Mammary epithelial cell (primary cell): ENCODE measurements at regions of chr14 and their contacts with region 1.

Region 1: GRCh38 chr14:67285876-67286452 is 44.7 kb downstream of the PALS1 start:
- DNase-seq: peak; percentile 11
- H3K4me3 ChIP-seq: no peak overlapping the region
- H3K27ac ChIP-seq: no peak overlapping the region
- H3K4me1 ChIP-seq: no peaks in the 10 kb centered on the region
- H3K27me3 ChIP-seq: no peaks in the 10 kb centered on the region
- CTCF ChIP-seq: peak; percentile 38 to 53

Region 2: GRCh38 chr14:66403183-66403582 is 882.8 kb before region 1 on chr14:
- CTCF ChIA-PET with region 1: no interaction called
- dilution Hi-C with region 1: no loop called
- in situ Hi-C with region 1: no loop called
- intact Hi-C with region 1: loop called (anchors 5 kb)
- DNase-seq: peak; percentile 50
- H3K4me3 ChIP-seq: no peak overlapping the region
- H3K27ac ChIP-seq: no peak overlapping the region
- H3K4me1 ChIP-seq: no peaks in the 10 kb centered on the region
- H3K27me3 ChIP-seq: no peaks in the 10 kb centered on the region
- CTCF ChIP-seq: peak; percentile 48 to 72

Region 3: GRCh38 chr14:67166450-67166853 is 119.5 kb before region 1 on chr14:
- CTCF ChIA-PET with region 1: interaction called, 5 read pairs
- dilution Hi-C with region 1: no loop called
- in situ Hi-C with region 1: loop called (anchors 5 to 10 kb)
- intact Hi-C with region 1: loop called (anchors 1 kb)
- DNase-seq: peak; percentile 21
- H3K4me3 ChIP-seq: no peak overlapping the region
- H3K27ac ChIP-seq: no peak overlapping the region
- H3K4me1 ChIP-seq: peaks cover 8% of the 10 kb centered on the region
- H3K27me3 ChIP-seq: no peaks in the 10 kb centered on the region
- CTCF ChIP-seq: peak; percentile 83 to 92

Region 4: DNA sequence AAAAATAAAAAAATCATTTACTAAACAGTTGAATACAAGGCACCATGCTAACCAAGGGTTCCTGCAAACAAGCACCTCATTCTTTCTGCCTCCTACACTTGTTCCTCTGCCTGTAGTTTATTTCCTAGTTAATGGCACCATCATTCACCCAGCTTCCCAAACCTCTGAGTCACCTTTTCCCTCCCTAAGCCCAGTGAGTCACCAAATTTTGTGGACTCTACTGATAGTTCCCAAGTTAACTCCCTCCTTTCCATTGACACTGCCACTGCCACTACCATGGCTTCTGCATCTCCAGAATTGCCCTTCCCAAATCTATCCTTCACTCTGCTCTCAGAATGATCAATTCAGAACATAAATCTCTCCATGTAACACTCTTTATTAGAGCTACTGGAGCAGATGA is 98.8 kb before region 1 on chr14:
- CTCF ChIA-PET with region 1: no interaction called
- dilution Hi-C with region 1: no loop called
- in situ Hi-C with region 1: no loop called
- intact Hi-C with region 1: loop called (anchors 5 kb)
- DNase-seq: peak; percentile 84
- H3K4me3 ChIP-seq: no peak overlapping the region
- H3K27ac ChIP-seq: peak overlapping the region; percentile 34
- H3K4me1 ChIP-seq: peaks cover 37% of the 10 kb centered on the region
- H3K27me3 ChIP-seq: no peaks in the 10 kb centered on the region
- CTCF ChIP-seq: no peak

Region 5: DNA sequence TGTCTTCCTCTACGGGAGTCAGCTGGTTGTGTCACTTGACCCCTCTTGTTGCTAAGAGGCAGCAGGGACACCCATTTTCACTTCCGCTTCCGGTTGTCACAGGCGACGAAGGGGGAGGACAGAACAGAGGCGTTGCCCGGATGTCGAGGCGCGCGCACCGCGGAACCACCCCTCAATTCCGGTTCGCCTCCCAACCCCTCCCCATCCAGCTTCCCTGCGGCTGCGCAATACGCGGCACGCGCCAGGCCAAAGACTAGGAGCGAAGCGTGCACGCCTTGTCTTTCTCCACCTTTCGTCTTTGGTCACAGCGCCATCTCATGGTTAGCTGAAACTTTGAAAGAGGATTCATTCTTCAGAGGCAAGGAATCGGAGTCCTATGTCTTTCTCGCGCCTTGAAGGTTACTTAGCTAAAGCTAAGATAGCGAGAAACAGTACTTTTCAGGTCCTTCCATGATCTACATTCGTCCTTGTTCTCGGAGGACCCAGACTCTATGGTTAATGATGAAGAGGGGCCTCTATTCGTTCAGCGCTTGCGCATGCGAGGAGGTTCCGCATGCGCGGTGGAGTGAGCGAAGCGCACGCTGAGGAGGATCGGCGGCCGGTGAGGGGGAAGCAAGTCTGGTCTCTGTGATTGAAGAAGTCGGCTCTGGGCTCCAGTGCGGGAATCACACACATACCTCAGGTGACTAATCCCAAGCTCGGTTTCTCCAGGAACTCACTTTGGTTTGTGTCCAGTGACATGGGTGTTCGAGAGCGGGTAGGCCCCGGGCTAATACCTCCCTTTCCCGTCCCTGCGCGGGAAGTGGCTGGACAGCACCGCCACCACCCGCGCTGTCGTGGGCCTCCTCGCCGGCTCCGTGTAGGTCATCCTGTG is 74.0 kb after region 1 on chr14 and contains the starts of genes ATP6V1D and EIF2S1:
- CTCF ChIA-PET with region 1: no interaction called
- dilution Hi-C with region 1: no loop called
- in situ Hi-C with region 1: no loop called
- intact Hi-C with region 1: no loop called
- DNase-seq: peak; percentile 99
- H3K4me3 ChIP-seq: peak within 1 kb of the TSS; percentile 82 to 90 (median 88)
- H3K27ac ChIP-seq: peak within 1 kb of the TSS; percentile 97
- H3K4me1 ChIP-seq: peaks cover 27% of the 10 kb centered on the region
- H3K27me3 ChIP-seq: no peaks in the 10 kb centered on the region
- CTCF ChIP-seq: peak; percentile 97 to 99
- total RNA-seq, gene ATP6V1D: 87.1 to 124 TPM
- total RNA-seq, gene EIF2S1: 120 to 198 TPM